K562 (cell line): ENCODE measurements at regions of chr22 and their contacts with region 1.

Region 1: DNA sequence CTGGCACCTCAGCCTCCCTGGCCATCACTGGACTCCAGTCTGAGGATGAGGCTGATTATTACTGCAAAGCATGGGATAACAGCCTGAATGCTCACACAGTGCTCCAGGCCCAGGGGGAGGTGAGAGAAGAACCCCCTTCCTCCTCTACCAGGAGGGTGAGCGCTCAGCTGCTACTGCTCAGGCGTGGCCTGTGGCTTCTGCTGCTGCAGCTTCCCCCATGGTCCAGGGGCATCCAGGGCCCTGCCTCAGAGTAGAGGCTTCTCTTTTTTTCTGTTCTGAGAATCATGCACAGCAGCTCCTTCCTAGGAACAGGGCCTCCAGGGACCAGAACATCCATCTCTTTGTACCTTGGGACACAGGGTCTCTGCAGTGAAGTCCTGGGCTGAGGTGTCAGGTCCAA is 83.1 kb downstream of the VPREB1 start:
- DNase-seq: no peak
- ATAC-seq: no peak
- H3K4me3 ChIP-seq: no peak overlapping the region
- H3K27ac ChIP-seq: no peak overlapping the region
- H3K4me1 ChIP-seq: 0 out of 5 replicates have a peak, but pooled peaks cover 0 to 2% of the 10 kb centered on the region in 2 experiments
- H3K27me3 ChIP-seq: peaks cover 37 to 49% of the 10 kb centered on the region in 2 experiments
- CTCF ChIP-seq: no peak
- EP300 ChIP-seq: no peak
- POLR2A ChIP-seq: no peak
- RAD21 ChIP-seq: no peak

Region 2: GRCh38 chr22:22342697-22343580 is 15.2 kb after region 1 on chr22:
- CTCF ChIA-PET with region 1: no interaction called
- POLR2A ChIA-PET with region 1: interaction called, 11 read pairs
- in situ Hi-C with region 1: no loop called
- intact Hi-C with region 1: no loop called
- DNase-seq: peak; percentile 95 to 99 (median 98)
- ATAC-seq: peak; percentile 98
- H3K4me3 ChIP-seq: no peak overlapping the region
- H3K27ac ChIP-seq: no peak overlapping the region
- H3K4me1 ChIP-seq: no peaks in the 10 kb centered on the region
- H3K27me3 ChIP-seq: peaks cover 11 to 33% of the 10 kb centered on the region in 2 experiments; a peak in 3 of 5 replicates
- CTCF ChIP-seq: peak in 2 of 3 experiments; percentile 99 to 100; a peak in 4 of 6 replicates
- EP300 ChIP-seq: no peak
- POLR2A ChIP-seq: no peak
- RAD21 ChIP-seq: peak in 1 of 2 experiments; percentile 92; a peak in 2 of 4 replicates